ENCODE measurements at regions of chr9 and their contacts with region 1.

Region 1: GRCh38 chr9:136225748-136226679 is 19.6 kb downstream of the QSOX2 start:
- DNase-seq: peak; percentile 63
- H3K4me3 ChIP-seq: no peak overlapping the region
- H3K27ac ChIP-seq: no peak overlapping the region
- H3K4me1 ChIP-seq: peaks cover 19% of the 10 kb centered on the region
- H3K27me3 ChIP-seq: no peaks in the 10 kb centered on the region
- CTCF ChIP-seq: peak; percentile 97 to 98

Region 2: GRCh38 chr9:135602789-135603481 is 623.1 kb before region 1 on chr9:
- CTCF ChIA-PET with region 1: no interaction called
- dilution Hi-C with region 1: no loop called
- in situ Hi-C with region 1: no loop called
- intact Hi-C with region 1: loop called (anchors 2 kb)
- DNase-seq: peak; percentile 23
- H3K4me3 ChIP-seq: no peak overlapping the region
- H3K27ac ChIP-seq: no peak overlapping the region
- H3K4me1 ChIP-seq: no peaks in the 10 kb centered on the region
- H3K27me3 ChIP-seq: no peaks in the 10 kb centered on the region
- CTCF ChIP-seq: peak; percentile 70 to 75

Region 3: DNA sequence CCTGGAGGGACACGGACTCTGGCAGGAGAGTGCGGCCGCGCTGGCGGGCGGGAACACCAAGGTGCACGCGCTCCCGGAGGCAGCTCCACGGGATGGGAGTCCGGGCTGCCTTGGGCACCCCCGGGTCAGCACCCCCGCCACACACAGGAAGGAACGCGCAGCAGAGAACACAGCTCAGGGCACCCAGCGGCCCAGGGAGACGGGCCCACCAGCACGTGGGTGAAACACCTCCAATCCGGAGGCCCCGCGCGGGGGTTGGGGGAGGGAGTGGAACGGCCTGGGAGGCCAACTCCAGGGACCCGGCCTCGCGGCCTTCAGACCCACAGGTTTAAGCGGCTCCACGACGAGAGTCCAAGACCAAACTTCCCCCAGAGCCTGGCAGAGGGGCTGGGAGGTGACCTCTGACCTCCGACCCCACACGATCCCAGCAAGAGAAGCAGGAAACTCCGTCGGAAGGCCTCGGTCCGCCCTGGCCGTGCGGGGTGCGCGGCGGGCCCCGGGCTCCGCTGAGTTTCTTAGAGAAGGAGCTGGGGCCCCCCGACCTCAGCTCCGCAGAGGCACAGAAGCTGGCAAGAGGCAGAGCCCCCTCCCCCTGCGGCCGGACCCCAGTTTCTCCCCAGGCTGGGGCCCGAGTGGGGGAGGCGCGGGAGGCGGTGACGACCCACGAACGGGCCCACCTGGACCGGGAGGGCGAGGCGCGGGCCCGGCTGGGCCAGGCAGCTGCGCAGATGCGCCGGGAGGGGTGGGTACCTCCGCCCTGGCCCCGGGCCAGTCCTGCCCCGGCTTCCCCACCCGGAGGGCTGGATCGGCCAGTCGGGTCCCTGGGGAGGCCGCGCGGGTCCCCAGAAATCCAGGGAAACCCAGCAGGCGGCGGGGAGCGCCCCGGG is 131.8 kb before region 1 on chr9:
- CTCF ChIA-PET with region 1: no interaction called
- dilution Hi-C with region 1: no loop called
- in situ Hi-C with region 1: no loop called
- intact Hi-C with region 1: loop called (anchors 5 kb)
- DNase-seq: peak; percentile 62
- H3K4me3 ChIP-seq: peak overlapping the region; percentile 65 to 77 (median 70)
- H3K27ac ChIP-seq: peak overlapping the region; percentile 33
- H3K4me1 ChIP-seq: peaks cover 35% of the 10 kb centered on the region
- H3K27me3 ChIP-seq: no peaks in the 10 kb centered on the region
- CTCF ChIP-seq: no peak

Region 4: DNA sequence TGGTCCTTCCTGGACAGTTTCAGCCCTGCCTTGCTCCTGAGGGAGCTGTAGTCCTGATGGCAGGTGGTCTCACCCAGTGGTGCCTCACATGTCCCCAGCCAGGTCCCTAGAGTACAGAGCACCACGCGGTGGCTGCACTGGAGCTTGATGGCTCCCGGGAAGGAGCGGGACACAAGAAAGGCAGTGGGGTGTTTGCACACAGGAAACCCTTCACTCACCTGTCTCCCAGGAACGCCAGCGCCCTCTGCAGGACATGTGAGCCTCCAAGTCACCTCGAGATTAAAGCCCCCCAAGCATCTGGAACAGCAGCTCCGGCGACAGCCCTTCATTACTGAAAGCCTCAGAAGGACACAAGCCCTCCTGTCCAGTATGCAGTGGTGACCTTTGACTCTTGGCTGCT is 87.4 kb before region 1 on chr9:
- CTCF ChIA-PET with region 1: no interaction called
- dilution Hi-C with region 1: no loop called
- in situ Hi-C with region 1: no loop called
- intact Hi-C with region 1: loop called (anchors 2 kb)
- DNase-seq: no peak
- H3K4me3 ChIP-seq: no peak overlapping the region
- H3K27ac ChIP-seq: no peak overlapping the region
- H3K4me1 ChIP-seq: peaks cover 14% of the 10 kb centered on the region
- H3K27me3 ChIP-seq: peaks cover 6% of the 10 kb centered on the region
- CTCF ChIP-seq: peak; percentile 26 to 48

Region 5: DNA sequence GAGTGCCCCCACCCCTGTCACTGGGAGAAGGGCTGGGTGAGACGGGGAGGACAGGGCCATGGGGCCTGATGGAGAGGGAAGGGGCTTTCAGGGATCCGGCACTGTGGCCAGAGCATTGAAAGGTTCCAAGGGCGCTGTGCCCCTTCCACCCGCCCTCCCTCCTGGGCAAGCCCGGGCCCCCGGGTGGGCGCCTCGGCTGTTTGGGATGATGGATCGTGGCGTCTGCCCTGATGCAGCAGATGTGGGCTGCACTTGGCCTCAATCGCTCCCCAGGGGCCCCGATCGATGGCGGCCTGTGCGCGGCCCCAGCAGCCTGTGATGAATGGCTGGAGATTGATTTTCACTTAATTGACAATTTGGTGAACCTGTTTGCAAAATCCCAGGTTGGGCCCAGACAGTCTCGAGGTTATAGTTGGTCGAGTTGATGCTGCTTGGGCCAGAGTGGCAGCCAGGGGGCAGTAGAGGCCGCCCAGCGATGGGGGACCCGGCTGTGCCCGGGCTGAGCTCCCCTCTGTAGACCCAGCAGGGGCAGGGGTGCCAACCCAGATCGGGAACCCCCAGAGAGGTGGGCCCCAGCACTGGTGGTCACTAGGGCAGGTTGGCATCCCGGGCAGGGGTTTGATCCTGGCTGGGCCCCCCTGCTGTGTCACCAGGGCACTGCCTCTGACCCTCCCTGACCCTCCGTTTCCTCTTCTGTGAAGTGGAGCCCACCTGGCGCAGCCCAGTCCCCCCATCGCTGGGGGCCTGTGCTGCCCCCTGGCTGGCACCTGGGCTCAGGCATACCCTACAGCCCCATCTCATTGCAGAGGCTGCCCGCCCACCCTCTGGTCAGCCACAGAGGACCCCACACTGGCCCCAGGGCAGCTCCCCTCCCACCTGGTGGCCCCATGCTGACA is 55.8 kb before region 1 on chr9:
- CTCF ChIA-PET with region 1: interaction called, 4 read pairs
- dilution Hi-C with region 1: no loop called
- in situ Hi-C with region 1: no loop called
- intact Hi-C with region 1: loop called (anchors 1 kb)
- DNase-seq: no peak
- H3K4me3 ChIP-seq: no peak overlapping the region
- H3K27ac ChIP-seq: no peak overlapping the region
- H3K4me1 ChIP-seq: no peaks in the 10 kb centered on the region
- H3K27me3 ChIP-seq: peaks cover 4% of the 10 kb centered on the region
- CTCF ChIP-seq: peak; percentile 80 to 83

Measured in mammary epithelial cell (primary cell).